ENCODE measurements at regions of chr14 and their contacts with region 1.

Region 1: GRCh38 chr14:81384900-81385299 is 15.2 kb downstream of the STON2 start:
- DNase-seq: no peak
- ATAC-seq: peak in 2 of 8 donors; percentile 61 to 82
- H3K4me3 ChIP-seq: no peak overlapping the region
- H3K27ac ChIP-seq: no peak overlapping the region
- H3K4me1 ChIP-seq: no peaks in the 10 kb centered on the region
- H3K27me3 ChIP-seq: peaks cover 0 to 5% (median 0%) of the 10 kb centered on the region in 7 donors
- CTCF ChIP-seq: no peak

Region 2: GRCh38 chr14:80726211-80726610 is 658.7 kb before region 1 on chr14:
- intact Hi-C with region 1: loop called in 1 of 10 experiments (anchors 10 kb)
- DNase-seq: no peak
- ATAC-seq: no peak
- H3K4me3 ChIP-seq: no peak overlapping the region
- H3K27ac ChIP-seq: no peak overlapping the region
- H3K4me1 ChIP-seq: no peaks in the 10 kb centered on the region
- H3K27me3 ChIP-seq: no peaks in the 10 kb centered on the region
- CTCF ChIP-seq: no peak

Measured in heart right ventricle (tissue), 16 donors.